ENCODE measurements at regions of chr15 and their contacts with region 1.

Region 1: GRCh38 chr15:65421360-65422070 is 1.2 kb downstream of the IGDCC4 start:
- DNase-seq: no peak
- H3K4me3 ChIP-seq: peak overlapping the region in 2 of 3 experiments; percentile 37 to 39
- H3K27ac ChIP-seq: no peak overlapping the region
- H3K4me1 ChIP-seq: peaks cover 11% of the 10 kb centered on the region
- H3K27me3 ChIP-seq: peaks cover 21% of the 10 kb centered on the region
- CTCF ChIP-seq: no peak

Region 2: DNA sequence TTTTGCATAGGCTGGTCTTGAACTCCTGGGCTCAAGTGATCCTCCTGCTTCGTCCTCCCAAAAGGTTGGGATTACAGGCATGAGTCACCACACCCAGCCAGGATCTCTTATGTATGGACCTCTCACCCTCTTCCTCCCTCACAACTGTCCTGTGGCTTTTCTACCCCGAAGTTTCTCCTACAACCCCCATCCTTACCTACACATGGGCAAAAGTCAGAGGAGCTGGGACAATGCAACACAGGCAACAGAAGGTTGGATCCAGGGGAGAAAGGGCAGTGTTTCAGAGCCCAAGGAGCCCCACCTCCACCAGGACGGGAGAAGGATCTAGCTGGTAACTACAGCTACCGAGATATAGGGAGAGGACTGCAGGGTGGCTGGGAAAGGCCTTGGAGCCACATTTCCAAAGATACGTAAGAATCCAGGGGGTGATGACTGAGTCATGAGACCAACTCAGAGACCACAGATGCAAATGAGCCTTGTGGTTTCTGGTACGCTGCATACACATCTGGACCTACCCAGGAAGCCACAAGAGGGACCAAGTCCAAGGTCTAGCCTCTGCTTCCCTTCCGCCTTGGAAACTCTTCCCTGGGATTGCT is 12.4 kb before region 1 on chr15:
- CTCF ChIA-PET with region 1: no interaction called
- dilution Hi-C with region 1: no loop called
- in situ Hi-C with region 1: no loop called
- intact Hi-C with region 1: loop called (anchors 2 kb)
- DNase-seq: peak; percentile 75
- H3K4me3 ChIP-seq: no peak overlapping the region
- H3K27ac ChIP-seq: no peak overlapping the region
- H3K4me1 ChIP-seq: peaks cover 6% of the 10 kb centered on the region
- H3K27me3 ChIP-seq: peaks cover 3% of the 10 kb centered on the region
- CTCF ChIP-seq: no peak

Region 3: GRCh38 chr15:65730549-65731172 is 309.1 kb after region 1 on chr15:
- CTCF ChIA-PET with region 1: no interaction called
- dilution Hi-C with region 1: no loop called
- in situ Hi-C with region 1: no loop called
- intact Hi-C with region 1: no loop called
- DNase-seq: peak; percentile 13
- H3K4me3 ChIP-seq: no peak overlapping the region
- H3K27ac ChIP-seq: no peak overlapping the region
- H3K4me1 ChIP-seq: peaks cover 13% of the 10 kb centered on the region
- H3K27me3 ChIP-seq: no peaks in the 10 kb centered on the region
- CTCF ChIP-seq: no peak